ENCODE measurements at regions of chr18 and their contacts with region 1.

Region 1: DNA sequence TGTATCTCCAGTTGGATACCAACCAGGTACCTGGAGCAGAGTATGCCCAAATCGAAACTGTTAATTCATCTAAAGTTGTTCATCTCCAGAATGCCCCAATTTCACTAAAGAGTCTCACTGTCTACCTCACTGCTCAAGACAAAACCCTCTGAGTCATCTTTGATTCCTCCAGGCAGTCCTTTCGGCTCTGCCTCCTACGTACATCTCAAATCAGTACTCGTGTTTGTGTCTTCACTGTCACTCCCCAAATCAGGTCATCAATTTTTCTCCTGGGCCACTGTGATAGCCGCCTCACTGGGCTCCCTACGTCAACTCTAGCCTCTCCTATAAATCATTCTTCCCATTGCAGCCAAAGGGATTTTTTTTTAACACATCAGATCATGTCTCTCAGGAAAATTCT is 42.1 kb upstream of the TTC39C start:
- DNase-seq: no peak
- H3K4me3 Mint-ChIP-seq: no peak overlapping the region
- H3K27ac Mint-ChIP-seq: no peak overlapping the region
- H3K4me1 Mint-ChIP-seq: peaks cover 47% of the 10 kb centered on the region
- H3K27me3 Mint-ChIP-seq: peaks cover 14% of the 10 kb centered on the region

Region 2: DNA sequence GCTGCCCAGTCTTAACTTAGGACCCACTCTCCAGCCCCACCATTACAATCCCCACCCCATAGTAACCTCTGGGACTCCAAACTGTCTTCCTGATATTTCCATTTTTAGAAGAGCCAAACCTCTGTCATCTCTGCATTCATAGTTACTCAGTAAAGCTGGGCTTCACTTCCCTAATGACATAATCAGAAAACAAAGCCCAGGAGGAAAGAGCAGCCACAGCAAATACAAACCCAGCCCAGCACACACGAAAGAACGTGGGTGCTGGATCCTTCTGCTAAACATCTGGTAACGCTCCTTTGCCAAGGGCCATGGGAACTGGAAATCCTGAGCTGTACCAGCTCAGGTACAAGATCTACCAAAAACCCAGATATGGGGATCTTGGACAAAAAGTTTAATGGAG is 556.1 kb before region 1 on chr18:
- intact Hi-C with region 1: no loop called
- DNase-seq: no peak
- H3K4me3 Mint-ChIP-seq: no peak overlapping the region
- H3K27ac Mint-ChIP-seq: no peak overlapping the region
- H3K4me1 Mint-ChIP-seq: no peaks in the 10 kb centered on the region
- H3K27me3 Mint-ChIP-seq: peaks cover 3% of the 10 kb centered on the region

Region 3: GRCh38 chr18:23943104-23943503 is 29.3 kb before region 1 on chr18:
- intact Hi-C with region 1: loop called (anchors 2 kb)
- DNase-seq: no peak
- H3K4me3 Mint-ChIP-seq: peak overlapping the region; percentile 3
- H3K27ac Mint-ChIP-seq: no peak overlapping the region
- H3K4me1 Mint-ChIP-seq: peaks cover 26% of the 10 kb centered on the region
- H3K27me3 Mint-ChIP-seq: peaks cover 33% of the 10 kb centered on the region

Region 4: GRCh38 chr18:23986600-23987359 is 14.4 kb after region 1 on chr18:
- intact Hi-C with region 1: loop called (anchors 2 kb)
- DNase-seq: no peak
- H3K4me3 Mint-ChIP-seq: no peak overlapping the region
- H3K27ac Mint-ChIP-seq: no peak overlapping the region
- H3K4me1 Mint-ChIP-seq: peaks cover 22% of the 10 kb centered on the region
- H3K27me3 Mint-ChIP-seq: peaks cover 5% of the 10 kb centered on the region

Region 5: GRCh38 chr18:23992089-23992940 is 19.9 kb after region 1 on chr18:
- intact Hi-C with region 1: loop called (anchors 1 kb)
- DNase-seq: peak; percentile 28
- H3K4me3 Mint-ChIP-seq: peak overlapping the region; percentile 24
- H3K27ac Mint-ChIP-seq: peak overlapping the region; percentile 27
- H3K4me1 Mint-ChIP-seq: peaks cover 35% of the 10 kb centered on the region
- H3K27me3 Mint-ChIP-seq: peaks cover 5% of the 10 kb centered on the region

Region 6: DNA sequence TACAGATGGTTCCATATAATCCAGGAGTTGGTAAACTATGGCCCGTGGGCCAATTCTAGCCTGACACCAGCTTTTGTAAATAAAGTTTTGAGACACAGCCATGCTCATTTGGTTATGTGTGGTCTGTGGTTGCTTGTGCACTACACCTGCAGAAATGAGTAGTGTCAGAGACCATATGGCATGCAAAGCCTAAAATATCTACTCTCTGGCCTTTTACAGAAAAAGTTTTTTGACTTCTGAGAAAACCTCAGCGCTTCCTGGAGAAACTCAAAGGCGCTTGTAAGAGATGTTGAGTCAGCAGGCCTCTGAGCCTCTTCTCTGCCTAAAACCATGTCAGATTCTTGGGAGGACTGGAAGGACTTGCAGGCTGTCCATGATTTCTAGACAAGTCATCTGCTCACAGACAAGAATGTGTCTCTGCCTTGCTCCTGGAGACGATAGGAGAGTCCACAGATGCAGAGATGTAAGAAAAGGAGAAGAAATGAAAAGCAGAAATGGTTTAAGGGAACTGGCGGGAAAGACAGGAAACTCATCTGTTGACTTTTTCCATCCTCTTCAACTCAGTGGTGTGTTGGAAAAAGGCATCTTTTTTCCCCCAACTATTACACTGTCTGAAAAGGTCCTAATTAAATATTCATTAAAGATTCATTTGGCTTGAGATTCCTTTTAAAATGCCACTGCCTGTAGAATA is 47.4 kb after region 1 on chr18:
- intact Hi-C with region 1: loop called (anchors 2 kb)
- DNase-seq: peak; percentile 71
- H3K4me3 Mint-ChIP-seq: peak overlapping the region; percentile 80
- H3K27ac Mint-ChIP-seq: peak overlapping the region; percentile 92
- H3K4me1 Mint-ChIP-seq: peaks cover 90% of the 10 kb centered on the region
- H3K27me3 Mint-ChIP-seq: no peaks in the 10 kb centered on the region

Region 7: DNA sequence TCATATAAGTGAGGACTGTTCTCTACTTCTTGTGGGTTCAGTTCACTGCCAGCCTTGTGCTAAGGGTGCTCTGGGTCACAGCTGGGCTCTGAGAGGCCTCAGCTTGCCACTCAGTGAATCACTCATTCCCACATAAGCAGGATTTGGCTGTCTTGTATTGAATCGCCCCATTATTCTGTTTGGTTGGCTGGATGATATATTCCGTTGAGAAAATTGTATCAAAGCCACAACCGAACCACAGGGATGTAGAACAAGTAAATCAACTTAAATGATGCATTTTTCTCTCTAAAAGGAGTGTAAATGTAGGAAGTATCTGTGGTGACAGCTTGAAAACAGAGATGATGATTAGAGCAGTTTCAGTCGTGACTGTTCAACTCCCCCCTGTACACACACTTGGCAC is 81.7 kb after region 1 on chr18:
- intact Hi-C with region 1: loop called (anchors 1 kb)
- DNase-seq: no peak
- H3K4me3 Mint-ChIP-seq: peak overlapping the region; percentile 12
- H3K27ac Mint-ChIP-seq: peak overlapping the region; percentile 74
- H3K4me1 Mint-ChIP-seq: peaks cover 76% of the 10 kb centered on the region
- H3K27me3 Mint-ChIP-seq: no peaks in the 10 kb centered on the region